H1 (cell line): ENCODE measurements at regions of chr2 and their contacts with region 1.

Region 1: DNA sequence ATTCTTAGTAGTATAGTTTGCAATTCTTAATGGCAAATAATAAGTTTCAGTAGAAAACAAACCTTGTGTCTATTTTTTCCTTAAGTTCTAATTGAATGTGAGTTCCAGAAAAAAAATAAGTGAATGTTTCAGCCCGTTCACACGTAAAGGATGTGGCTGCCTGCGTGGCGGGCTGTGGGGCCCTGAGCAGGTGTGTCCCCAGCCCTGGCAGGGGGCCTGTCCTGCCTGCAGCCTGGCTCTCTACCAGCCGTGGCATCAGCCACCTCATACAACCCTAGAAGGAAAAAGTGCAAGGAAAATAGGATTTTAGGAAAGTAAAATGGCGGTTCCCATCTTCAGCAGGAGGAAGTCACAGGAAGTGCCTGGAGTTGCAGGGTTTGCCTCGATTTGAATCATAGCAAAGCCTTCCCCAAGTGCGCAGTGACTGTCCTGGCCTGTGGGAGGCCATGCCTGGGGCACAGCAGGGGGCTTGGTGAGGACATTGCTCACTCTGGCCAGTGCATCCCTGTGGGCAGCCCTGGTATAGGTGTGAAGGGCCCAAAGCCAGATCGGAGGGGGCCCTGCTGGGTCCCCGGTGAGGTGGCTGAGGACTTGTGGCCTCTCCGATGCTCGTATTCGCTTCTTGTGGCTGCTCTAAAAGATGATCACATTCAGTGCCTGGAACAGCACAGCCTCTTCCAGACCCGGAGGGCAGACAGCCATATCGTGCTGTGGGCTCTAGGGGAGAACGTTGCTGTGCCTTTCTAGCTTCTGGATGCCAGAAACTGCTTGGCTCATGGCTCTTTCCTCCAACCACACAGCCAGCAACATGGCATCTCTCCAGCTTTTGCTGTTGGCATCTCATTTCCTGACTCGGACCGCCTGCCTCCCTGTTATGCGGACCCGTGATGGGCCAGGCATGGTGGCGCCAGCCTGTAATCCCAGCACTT is 12.6 kb downstream of the DTYMK start:
- DNase-seq: peak in 1 of 2 experiments; percentile 63
- H3K4me3 ChIP-seq: no peak overlapping the region
- H3K27ac ChIP-seq: 0 out of 2 replicates have a peak overlapping the region, but pooled peaks have one; percentile 14
- H3K4me1 ChIP-seq: no peaks in the 10 kb centered on the region
- H3K27me3 ChIP-seq: no peaks in the 10 kb centered on the region
- CTCF ChIP-seq: peak in 2 of 3 experiments; percentile 26 to 34; a peak in 2 of 4 replicates
- EP300 ChIP-seq: no peak
- POLR2A ChIP-seq: no peak
- RAD21 ChIP-seq: no peak

Region 2: GRCh38 chr2:241617431-241618154 is 56.5 kb before region 1 on chr2:
- CTCF ChIA-PET with region 1: no interaction called
- POLR2A ChIA-PET with region 1: no interaction called
- DNase-seq: no peak
- H3K4me3 ChIP-seq: peak overlapping the region in 3 of 4 experiments; percentile 12 to 52 (median 24); a peak in 5 of 8 replicates
- H3K27ac ChIP-seq: peak overlapping the region; percentile 11; the same call in 1 of the 2 replicates
- H3K4me1 ChIP-seq: peaks cover 0 to 6% (median 2%) of the 10 kb centered on the region in 4 experiments; a peak in 5 of 7 replicates
- H3K27me3 ChIP-seq: no peaks in the 10 kb centered on the region
- CTCF ChIP-seq: no peak
- EP300 ChIP-seq: no peak
- POLR2A ChIP-seq: no peak
- RAD21 ChIP-seq: no peak

Region 3: DNA sequence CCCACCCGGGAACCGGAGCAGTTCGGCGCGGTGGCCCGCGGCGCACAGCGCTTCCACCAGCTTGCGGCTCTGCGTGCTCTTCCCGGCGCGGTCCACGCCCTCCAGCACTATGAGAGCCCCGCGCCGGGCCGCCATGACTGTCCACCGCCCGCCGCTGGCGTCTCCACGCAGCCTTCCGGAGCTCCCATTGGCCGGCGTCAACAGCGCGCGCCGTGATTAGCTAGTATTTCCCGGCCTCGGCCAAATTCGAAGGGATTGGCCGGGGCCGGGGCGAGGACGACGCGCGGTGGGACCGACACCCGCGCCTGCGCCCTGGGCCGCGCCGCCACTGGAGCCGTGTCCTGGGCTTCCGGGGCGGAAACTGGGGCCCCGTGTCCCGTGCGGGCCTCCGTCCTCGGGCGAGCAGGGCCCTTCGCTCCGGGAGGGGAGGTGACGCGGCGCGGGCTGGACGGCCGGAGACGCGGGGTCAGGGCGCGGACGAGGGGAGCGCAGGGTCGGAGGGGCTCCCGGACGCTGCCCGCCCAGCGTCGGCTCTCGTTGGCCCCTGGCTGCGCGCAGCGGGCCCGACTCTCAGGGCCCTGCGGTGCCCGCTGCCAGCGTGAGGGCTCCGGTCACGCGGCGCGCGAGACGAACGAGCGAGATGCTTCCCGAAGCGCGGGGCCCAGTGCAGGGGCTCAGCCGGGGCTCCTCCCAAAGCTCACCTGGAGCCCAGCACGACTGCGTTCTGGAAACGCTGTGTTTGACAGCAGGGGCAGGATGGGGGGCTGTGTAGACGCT is 12.8 kb after region 1 on chr2 and contains the start of gene DTYMK:
- CTCF ChIA-PET with region 1: interaction called, 6 read pairs
- POLR2A ChIA-PET with region 1: interaction called, 60 read pairs
- DNase-seq: peak in 1 of 2 experiments; percentile 95
- H3K4me3 ChIP-seq: peak within 1 kb of the TSS; percentile 84 to 94 (median 91)
- H3K27ac ChIP-seq: peak within 1 kb of the TSS; percentile 88
- H3K4me1 ChIP-seq: peaks cover 0 to 8% (median 0%) of the 10 kb centered on the region in 4 experiments; a peak in 1 of 7 replicates
- H3K27me3 ChIP-seq: no peaks in the 10 kb centered on the region
- CTCF ChIP-seq: no peak
- EP300 ChIP-seq: peak in 1 of 2 experiments; percentile 15; a peak in 1 of 3 replicates
- POLR2A ChIP-seq: peak; percentile 89
- RAD21 ChIP-seq: no peak
- total RNA-seq, gene DTYMK: 69.9 and 70.5 TPM in 2 replicates